Mammary epithelial cell (primary cell): ENCODE measurements at regions of chr11 and their contacts with region 1.

Region 1: GRCh38 chr11:81005595-81005994 is 1564.8 kb upstream of the TENM4 start:
- DNase-seq: peak; percentile 93
- H3K4me3 ChIP-seq: no peak overlapping the region
- H3K27ac ChIP-seq: peak overlapping the region; percentile 60
- H3K4me1 ChIP-seq: peaks cover 13% of the 10 kb centered on the region
- H3K27me3 ChIP-seq: no peaks in the 10 kb centered on the region
- CTCF ChIP-seq: no peak

Region 2: DNA sequence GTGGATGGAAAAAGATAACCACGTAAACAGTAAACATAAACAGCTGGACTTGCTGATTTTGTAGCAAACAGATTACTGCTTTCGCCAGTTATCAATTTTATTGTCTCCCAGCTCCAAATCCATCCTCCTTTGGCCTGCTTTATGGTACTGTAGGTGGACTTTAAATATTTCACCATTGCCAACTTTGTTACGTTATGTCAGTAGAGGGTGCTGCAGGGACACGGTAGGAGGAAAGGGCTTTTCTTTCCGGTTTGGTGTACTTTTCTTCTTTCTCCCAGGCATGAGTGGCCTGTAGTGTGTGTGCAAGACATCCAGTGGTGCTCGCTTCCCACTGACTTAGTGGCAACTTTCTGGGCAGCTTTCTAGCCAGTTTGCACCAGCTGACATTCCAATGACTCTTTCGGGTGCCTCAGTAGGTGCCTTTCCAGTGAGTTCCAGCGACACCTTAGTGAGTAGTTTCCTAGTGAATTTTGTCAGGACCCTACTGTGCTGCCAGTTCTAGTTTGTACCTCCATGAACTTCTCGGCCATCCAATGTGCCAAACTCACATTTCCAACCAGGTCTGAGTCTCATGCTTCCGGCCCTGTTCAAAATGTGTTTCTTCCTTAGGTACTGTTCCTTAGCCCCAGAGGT is 1297.2 kb before region 1 on chr11:
- CTCF ChIA-PET with region 1: no interaction called
- dilution Hi-C with region 1: no loop called
- in situ Hi-C with region 1: no loop called
- intact Hi-C with region 1: loop called (anchors 2 kb)
- DNase-seq: peak; percentile 49
- H3K4me3 ChIP-seq: no peak overlapping the region
- H3K27ac ChIP-seq: no peak overlapping the region
- H3K4me1 ChIP-seq: no peaks in the 10 kb centered on the region
- H3K27me3 ChIP-seq: no peaks in the 10 kb centered on the region
- CTCF ChIP-seq: peak; percentile 65 to 80

Region 3: DNA sequence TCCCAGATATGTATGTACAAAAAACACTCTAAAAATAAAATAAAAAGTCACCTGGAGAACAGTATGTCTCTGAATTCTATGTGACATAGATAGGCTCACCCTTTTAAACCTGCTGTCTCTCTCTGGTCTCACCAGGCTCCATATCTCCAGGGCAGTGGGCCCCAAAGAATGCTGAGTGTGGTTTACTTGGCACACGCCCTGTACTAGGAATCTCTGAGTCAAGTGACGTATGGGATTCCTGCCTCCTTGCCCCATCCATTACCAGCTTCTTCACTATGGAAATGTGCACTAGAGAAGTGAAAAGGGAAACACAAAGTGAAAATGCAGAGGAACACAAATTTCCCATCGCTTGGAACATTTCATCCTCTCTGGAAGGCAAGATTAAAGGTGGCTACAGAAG is 842.6 kb before region 1 on chr11:
- CTCF ChIA-PET with region 1: no interaction called
- dilution Hi-C with region 1: no loop called
- in situ Hi-C with region 1: no loop called
- intact Hi-C with region 1: loop called (anchors 5 kb)
- DNase-seq: peak; percentile 56
- H3K4me3 ChIP-seq: no peak overlapping the region
- H3K27ac ChIP-seq: peak overlapping the region; percentile 12
- H3K4me1 ChIP-seq: peaks cover 14% of the 10 kb centered on the region
- H3K27me3 ChIP-seq: no peaks in the 10 kb centered on the region
- CTCF ChIP-seq: no peak

Region 4: GRCh38 chr11:80297884-80298632 is 707.5 kb before region 1 on chr11:
- CTCF ChIA-PET with region 1: no interaction called
- dilution Hi-C with region 1: no loop called
- in situ Hi-C with region 1: no loop called
- intact Hi-C with region 1: loop called (anchors 10 kb)
- DNase-seq: peak; percentile 67
- H3K4me3 ChIP-seq: no peak overlapping the region
- H3K27ac ChIP-seq: peak overlapping the region; percentile 69
- H3K4me1 ChIP-seq: peaks cover 8% of the 10 kb centered on the region
- H3K27me3 ChIP-seq: no peaks in the 10 kb centered on the region
- CTCF ChIP-seq: no peak

Region 5: DNA sequence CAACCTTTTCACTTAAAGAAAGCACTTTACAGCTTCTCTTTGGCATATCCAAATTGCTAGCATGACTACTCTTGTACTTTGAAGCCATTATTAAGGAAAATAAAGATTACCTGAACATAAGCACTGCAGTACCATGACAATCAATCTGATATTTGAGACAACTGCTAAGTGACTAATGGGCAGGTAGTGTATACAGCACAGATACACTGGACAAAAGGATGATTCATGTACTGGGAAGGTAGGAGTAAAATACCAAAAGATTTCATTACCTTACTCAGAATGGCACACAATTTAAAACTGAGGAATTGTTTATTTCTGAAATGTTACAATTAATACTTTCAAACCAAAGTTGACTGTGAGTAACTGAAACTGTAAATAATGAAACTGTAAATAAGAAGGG is 510.5 kb before region 1 on chr11:
- CTCF ChIA-PET with region 1: no interaction called
- dilution Hi-C with region 1: no loop called
- in situ Hi-C with region 1: no loop called
- intact Hi-C with region 1: loop called (anchors 10 kb)
- DNase-seq: peak; percentile 69
- H3K4me3 ChIP-seq: no peak overlapping the region
- H3K27ac ChIP-seq: peak overlapping the region; percentile 46
- H3K4me1 ChIP-seq: peaks cover 4% of the 10 kb centered on the region
- H3K27me3 ChIP-seq: no peaks in the 10 kb centered on the region
- CTCF ChIP-seq: no peak

Region 6: DNA sequence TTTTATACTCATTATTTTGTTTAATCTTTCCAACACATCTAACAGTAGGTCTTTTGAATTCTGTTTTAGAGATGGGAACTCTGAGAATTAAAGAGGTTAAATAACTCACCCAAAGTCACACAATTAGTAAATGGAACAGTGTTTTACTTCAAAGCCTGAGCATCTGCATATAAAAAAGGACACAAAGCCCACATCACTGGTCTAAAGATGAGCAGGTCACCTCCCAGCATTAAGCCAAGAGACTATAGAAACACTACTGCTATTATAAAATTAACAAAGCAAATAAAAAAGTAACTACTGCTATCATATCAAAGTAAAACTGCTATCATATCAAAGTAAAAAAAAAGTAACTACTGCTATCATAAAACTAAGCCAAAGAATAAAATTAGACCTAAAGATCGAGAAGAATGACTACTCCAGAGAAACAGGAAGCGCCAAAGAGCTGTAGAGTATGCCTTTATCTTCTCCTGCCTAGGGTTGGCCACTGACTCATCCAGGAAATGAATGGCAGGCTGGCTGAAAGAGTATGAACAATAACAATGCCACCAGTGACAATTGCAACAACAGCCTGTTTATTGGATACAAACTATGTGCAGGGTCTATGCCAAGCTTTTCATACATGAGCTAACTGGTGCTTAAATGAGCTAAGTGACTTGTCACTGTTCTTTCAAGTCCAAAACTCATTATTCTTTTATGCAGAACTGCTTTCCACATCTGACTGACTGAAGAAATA is 411.8 kb before region 1 on chr11:
- CTCF ChIA-PET with region 1: interaction called, 3 read pairs
- dilution Hi-C with region 1: no loop called
- in situ Hi-C with region 1: no loop called
- intact Hi-C with region 1: loop called (anchors 10 kb)
- DNase-seq: peak; percentile 76
- H3K4me3 ChIP-seq: peak overlapping the region in 1 of 3 experiments; percentile 23
- H3K27ac ChIP-seq: peak overlapping the region; percentile 60
- H3K4me1 ChIP-seq: peaks cover 31% of the 10 kb centered on the region
- H3K27me3 ChIP-seq: no peaks in the 10 kb centered on the region
- CTCF ChIP-seq: no peak

Region 7: DNA sequence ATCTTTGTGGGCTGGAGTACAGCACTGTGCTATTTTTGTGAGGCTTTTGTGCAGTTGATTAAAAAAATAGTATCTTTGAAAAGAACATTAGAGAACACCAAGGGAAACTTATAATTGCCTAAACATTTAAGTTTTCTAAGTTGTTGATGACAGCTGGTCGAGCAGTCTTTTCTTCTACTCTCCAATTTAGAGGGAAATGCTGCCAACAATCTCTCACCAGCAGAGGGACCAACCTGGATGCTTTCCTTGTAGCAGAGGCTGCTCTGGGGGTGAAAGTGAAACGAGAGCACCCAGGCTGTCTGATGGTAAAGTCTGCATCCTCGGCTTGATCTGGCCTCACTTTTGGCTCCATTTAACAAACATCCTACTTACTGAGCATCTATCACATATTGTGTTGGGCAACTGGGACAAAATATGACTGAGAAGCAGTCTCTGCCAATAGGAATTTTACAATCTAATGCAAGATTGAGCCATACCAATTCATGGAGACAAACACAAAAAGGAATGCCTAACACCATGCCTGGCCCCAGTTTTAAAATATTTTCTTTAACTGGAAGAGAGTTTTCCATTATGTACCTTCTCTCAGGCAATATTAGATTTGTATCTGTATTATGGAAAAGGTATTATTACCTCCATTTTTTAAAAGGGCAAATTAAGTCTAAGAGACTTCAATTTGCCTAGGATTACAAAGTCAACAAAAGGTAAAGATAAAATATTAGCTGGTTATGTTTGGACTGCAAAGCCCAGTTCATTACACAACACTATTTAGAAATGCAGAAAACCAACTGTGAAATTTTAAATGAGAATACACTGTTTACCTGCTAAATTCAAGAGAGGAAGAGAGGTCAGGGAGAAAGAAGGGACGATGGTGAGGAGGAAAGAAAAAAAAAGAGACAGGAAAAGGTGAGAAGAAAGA is 278.0 kb before region 1 on chr11:
- CTCF ChIA-PET with region 1: no interaction called
- dilution Hi-C with region 1: no loop called
- in situ Hi-C with region 1: no loop called
- intact Hi-C with region 1: loop called (anchors 2 kb)
- DNase-seq: no peak
- H3K4me3 ChIP-seq: no peak overlapping the region
- H3K27ac ChIP-seq: no peak overlapping the region
- H3K4me1 ChIP-seq: peaks cover 16% of the 10 kb centered on the region
- H3K27me3 ChIP-seq: no peaks in the 10 kb centered on the region
- CTCF ChIP-seq: peak; percentile 55 to 56